Activated CD4-positive, alpha-beta T cell treated with anti-CD3 and anti-CD28 coated beads for 36 hours (primary cell): ENCODE measurements at regions of chr9 and their contacts with region 1.

Region 1: DNA sequence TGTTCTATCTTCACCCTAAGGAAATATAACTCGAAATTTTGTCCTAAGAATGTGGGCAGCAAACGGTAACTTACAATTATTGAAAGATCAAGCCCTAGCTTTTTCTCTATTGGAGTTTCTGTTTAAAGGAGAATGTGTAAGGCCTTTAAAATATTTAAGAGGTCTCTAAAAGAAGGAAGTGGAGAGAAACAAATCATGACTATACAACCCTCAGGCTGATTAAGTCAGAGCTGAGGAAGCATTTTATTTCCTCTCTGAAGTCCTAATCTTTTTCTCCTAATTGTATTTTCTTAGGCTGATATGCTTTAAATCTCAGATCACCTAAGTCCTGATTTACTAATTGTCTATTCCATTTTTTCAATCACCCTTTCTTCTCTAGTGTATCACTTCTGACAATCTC is 1708.8 kb upstream of the C9orf72 start:
- DNase-seq: no peak
- ATAC-seq: no peak
- H3K4me3 Mint-ChIP-seq: no peak overlapping the region
- H3K27ac Mint-ChIP-seq: no peak overlapping the region
- H3K4me1 Mint-ChIP-seq: no peaks in the 10 kb centered on the region
- H3K27me3 Mint-ChIP-seq: no peaks in the 10 kb centered on the region

Region 2: GRCh38 chr9:29297592-29297991 is 15.5 kb after region 1 on chr9:
- CTCF ChIA-PET with region 1: interaction called, 4 read pairs
- POLR2A ChIA-PET with region 1: no interaction called
- intact Hi-C with region 1: loop called in 1 of 2 experiments (anchors 2 kb)
- DNase-seq: no peak
- ATAC-seq: no peak
- H3K4me3 Mint-ChIP-seq: no peak overlapping the region
- H3K27ac Mint-ChIP-seq: no peak overlapping the region
- H3K4me1 Mint-ChIP-seq: no peaks in the 10 kb centered on the region
- H3K27me3 Mint-ChIP-seq: no peaks in the 10 kb centered on the region

Region 3: GRCh38 chr9:30160570-30160969 is 878.4 kb after region 1 on chr9:
- CTCF ChIA-PET with region 1: no interaction called
- POLR2A ChIA-PET with region 1: no interaction called
- intact Hi-C with region 1: no loop called
- DNase-seq: no peak
- ATAC-seq: no peak
- H3K4me3 Mint-ChIP-seq: no peak overlapping the region
- H3K27ac Mint-ChIP-seq: no peak overlapping the region
- H3K4me1 Mint-ChIP-seq: no peaks in the 10 kb centered on the region
- H3K27me3 Mint-ChIP-seq: no peaks in the 10 kb centered on the region